HEK293T (cell line): ENCODE measurements at regions of chr5 and their contacts with region 1.

Region 1: DNA sequence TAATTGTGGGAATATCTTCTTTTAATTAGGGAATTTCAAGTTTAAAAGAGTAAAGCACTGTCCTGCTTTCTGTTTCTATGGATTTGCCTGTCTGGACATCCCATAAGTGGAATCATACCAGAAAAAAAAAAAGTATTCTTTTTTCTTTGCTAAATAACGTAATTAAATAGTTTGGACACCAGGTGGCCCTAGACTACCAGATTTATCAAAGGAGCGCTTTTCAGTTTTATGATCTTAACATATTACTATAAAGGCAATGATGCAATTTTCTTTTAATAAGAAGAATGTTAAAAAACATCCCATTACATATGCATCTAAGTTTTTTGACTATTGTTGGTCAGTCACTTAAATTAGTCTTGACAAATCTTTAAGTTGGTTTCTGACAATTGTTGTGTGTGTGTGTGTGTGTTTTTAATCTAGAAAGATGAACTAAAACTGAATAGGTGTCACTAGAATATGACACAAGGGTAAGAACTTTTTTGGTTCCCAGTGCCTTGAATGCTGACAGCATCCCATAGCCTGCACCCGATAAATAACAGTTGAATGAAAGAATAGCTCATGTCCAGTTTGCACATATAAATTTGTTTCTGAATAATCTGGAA is 49.5 kb downstream of the C5orf22 start:
- DNase-seq: peak; percentile 10

Region 2: DNA sequence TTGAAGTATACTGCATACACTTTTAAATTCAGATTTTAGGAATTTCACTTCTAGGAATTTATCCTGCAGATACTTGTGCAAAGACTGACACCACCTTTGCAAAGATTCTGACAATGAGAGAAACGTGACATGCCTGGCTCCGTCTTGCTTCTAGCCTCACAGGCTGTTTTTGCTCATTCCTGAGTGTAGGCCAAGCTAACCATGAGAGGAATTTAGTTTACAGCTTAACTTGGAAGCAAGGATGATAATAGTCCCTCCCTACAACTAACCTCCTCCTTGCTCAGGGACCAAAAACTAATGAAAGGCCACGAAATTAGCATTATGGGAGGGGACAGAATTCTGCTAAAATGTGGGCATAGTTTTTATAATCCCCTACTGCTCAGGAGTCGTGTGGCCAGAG is 18.4 kb before region 1 on chr5:
- CTCF ChIA-PET with region 1: no interaction called
- POLR2A ChIA-PET with region 1: no interaction called
- DNase-seq: no peak

Region 3: GRCh38 chr5:31809050-31809870 is 227.7 kb after region 1 on chr5:
- CTCF ChIA-PET with region 1: interaction called, 13 read pairs
- POLR2A ChIA-PET with region 1: no interaction called
- DNase-seq: peak; percentile 79